GM23248 (cell line): ENCODE measurements at regions of chr15 and their contacts with region 1.

Region 1: DNA sequence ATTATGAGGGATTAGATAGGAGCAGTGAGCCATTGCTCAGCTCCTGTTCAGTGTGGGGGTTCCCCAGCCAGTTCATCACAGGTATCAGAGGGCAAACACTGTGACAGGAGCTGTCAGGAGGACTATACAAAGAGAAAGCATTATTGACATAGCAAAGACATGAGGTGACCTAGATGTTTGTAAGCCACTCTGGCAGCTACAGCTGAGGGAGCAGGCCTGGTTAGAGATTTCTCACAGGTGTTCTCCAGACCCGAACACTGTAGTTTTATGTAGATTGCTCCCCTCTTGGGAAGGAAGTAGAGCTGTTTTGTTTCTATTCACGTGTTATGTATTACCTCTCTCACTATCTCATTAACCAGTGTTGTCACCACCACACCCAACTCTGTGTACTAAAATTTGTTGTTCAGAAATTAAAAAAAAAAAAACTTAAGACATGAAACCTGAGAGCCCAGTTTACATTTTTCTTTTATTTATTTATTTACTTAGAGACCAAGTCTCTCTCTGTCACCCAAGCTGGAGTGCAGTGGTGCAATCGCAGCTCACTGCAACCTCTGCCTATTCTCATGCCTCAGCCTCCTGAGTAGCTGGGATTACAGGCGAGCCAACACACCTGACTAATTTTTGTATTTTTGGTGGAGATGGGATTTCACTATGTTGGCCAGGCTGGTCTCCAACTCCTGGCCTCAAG is 123.7 kb downstream of the RBPMS2 start:
- DNase-seq: no peak
- H3K4me3 ChIP-seq: no peak overlapping the region
- H3K27ac ChIP-seq: no peak overlapping the region
- H3K4me1 ChIP-seq: no peaks in the 10 kb centered on the region
- H3K27me3 ChIP-seq: no peaks in the 10 kb centered on the region

Region 2: DNA sequence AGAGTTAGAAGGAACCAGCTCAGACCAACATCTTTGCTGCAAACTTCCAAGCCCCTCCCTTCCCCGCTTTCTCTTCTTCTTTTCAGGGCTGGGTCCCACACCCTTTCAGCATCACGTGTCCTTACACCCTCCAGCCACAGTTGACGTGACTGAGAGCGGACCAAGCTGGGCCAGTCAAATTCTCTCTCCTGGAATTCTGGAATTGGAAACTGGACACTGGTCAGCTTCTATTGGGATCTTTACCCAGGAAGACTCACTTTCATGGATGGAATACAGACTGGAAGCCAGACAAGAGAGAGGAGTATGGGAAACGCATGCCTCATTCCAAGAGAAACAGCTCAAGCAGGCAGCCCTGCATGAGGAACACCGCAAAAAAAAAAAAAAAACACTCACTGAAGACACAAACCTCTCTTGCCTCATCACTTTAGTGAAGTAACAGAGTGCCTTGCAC is 1621.6 kb before region 1 on chr15:
- in situ Hi-C with region 1: no loop called
- DNase-seq: peak; percentile 80
- H3K4me3 ChIP-seq: peak overlapping the region; percentile 27; the same call in 1 of the 2 replicates
- H3K27ac ChIP-seq: peak overlapping the region; percentile 51
- H3K4me1 ChIP-seq: peaks cover 16% of the 10 kb centered on the region
- H3K27me3 ChIP-seq: no peaks in the 10 kb centered on the region

Region 3: DNA sequence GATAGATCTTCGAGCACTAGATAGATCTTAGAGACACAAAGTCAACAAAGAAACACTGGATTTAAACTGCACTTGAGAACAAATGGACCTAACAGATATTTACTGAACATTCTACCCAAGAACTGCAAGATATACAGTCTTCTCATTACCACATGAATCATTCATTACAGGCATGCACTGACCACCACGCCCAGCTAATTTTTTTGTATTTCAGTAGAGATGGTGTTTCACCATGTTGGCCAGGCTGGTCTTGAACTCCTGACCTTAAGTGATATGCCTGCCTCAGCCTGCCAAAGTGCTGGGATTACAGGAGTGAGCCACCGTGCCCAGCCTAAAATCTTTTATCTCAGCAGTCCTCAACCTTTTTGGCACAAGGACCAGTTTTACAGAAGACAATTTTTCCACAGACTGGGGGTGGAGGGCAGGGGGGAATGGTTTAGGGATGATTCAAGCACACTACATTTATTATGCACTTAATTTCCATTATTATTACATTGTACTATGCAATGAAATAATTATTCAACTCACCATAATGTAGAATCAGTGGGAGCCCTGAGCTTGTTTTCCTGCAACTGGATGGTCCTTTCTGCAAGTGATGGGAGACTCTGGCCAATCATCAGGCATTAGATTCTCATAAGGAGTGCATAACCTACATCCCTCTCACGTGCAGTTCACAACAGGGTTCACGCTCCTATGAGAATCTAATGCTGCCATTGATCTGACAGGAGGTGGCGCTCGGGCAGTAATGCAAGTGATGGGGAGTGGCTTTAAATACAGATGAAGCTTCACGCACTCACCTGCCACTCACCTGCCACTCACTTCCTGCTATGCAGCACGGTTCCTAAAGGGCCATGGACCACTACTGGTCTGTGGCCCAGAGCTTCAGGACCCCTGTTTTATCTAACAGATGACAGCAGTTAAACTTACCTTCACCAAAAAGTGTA is 317.5 kb before region 1 on chr15:
- in situ Hi-C with region 1: no loop called
- DNase-seq: peak; percentile 55
- H3K4me3 ChIP-seq: no peak overlapping the region
- H3K27ac ChIP-seq: peak overlapping the region; percentile 25; the same call in 1 of the 2 replicates
- H3K4me1 ChIP-seq: peaks cover 11% of the 10 kb centered on the region
- H3K27me3 ChIP-seq: no peaks in the 10 kb centered on the region

Region 4: DNA sequence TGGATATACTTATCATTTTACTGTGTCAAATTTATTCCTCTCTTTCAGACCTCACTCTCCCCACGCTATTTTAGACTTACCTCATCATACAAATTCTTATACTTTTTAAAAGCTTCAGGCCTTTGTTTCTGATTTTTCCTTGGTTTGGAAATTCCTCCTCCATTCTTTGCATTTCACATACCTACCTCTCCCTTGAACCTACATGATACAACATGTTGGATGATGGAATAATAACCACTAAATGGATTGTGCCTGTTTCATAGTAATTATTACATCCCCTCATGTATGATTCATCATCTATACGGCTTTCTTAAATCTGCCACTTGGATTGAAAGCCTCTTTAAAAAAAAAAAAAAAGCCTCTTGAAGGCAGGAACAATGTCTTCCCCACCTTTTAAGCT is 239.5 kb before region 1 on chr15:
- in situ Hi-C with region 1: no loop called
- DNase-seq: no peak
- H3K4me3 ChIP-seq: no peak overlapping the region
- H3K27ac ChIP-seq: no peak overlapping the region
- H3K4me1 ChIP-seq: no peaks in the 10 kb centered on the region
- H3K27me3 ChIP-seq: no peaks in the 10 kb centered on the region

Region 5: DNA sequence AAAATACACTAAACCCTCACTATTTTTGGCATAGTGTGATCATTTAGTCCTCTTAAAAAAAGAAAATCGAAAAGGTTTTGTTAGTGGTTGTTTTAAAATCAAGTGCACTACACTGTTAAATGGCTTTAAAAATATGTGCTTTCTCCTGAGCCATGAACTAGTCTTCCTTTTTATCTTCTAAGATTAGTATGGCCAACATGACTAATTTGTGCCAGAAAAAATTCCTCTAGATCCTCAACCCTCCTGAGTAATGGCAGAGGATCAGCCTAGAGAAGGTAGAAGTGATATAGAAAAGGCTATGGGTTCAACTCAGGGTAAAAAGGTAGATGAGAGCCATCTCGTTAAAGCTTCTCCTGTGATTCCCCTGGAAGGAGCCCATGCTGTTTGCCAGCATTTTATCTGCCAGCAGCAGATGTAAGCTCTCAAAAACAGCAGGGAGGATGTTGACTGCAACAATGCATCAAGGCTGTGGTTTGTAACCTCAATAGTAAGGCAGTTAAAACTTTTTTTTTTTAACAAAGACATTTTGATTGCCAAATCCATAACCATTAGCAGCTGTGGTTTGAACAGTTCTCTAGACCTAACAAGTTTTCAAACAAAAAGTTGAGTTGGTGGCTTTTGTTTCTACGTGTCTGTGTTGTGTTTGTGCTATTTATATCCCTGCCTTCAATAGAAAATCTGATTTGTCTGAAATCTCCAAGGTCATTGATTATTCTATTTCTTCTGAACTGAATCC is 221.5 kb before region 1 on chr15:
- in situ Hi-C with region 1: loop called (anchors 10 kb)
- DNase-seq: peak; percentile 91
- H3K4me3 ChIP-seq: peak overlapping the region; percentile 7
- H3K27ac ChIP-seq: peak overlapping the region; percentile 69
- H3K4me1 ChIP-seq: peaks cover 19% of the 10 kb centered on the region
- H3K27me3 ChIP-seq: no peaks in the 10 kb centered on the region

Region 6: GRCh38 chr15:64710664-64711428 is 59.1 kb after region 1 on chr15:
- in situ Hi-C with region 1: no loop called
- DNase-seq: no peak
- H3K4me3 ChIP-seq: no peak overlapping the region
- H3K27ac ChIP-seq: no peak overlapping the region
- H3K4me1 ChIP-seq: no peaks in the 10 kb centered on the region
- H3K27me3 ChIP-seq: no peaks in the 10 kb centered on the region